Activated naive CD4-positive, alpha-beta T cell treated with anti-CD3 and anti-CD28 coated beads for 36 hours (primary cell): ENCODE measurements at regions of chr11 and their contacts with region 1.

Region 1: GRCh38 chr11:108237058-108237481 is 14.2 kb downstream of the ATM start:
- DNase-seq: no peak
- H3K4me3 Mint-ChIP-seq: peak overlapping the region; percentile 64
- H3K27ac Mint-ChIP-seq: peak overlapping the region; percentile 91
- H3K4me1 Mint-ChIP-seq: peaks cover 75% of the 10 kb centered on the region
- H3K27me3 Mint-ChIP-seq: no peaks in the 10 kb centered on the region

Region 2: GRCh38 chr11:108093128-108093904 is 143.8 kb before region 1 on chr11:
- CTCF ChIA-PET with region 1: no interaction called
- intact Hi-C with region 1: no loop called
- DNase-seq: no peak
- H3K4me3 Mint-ChIP-seq: no peak overlapping the region
- H3K27ac Mint-ChIP-seq: no peak overlapping the region
- H3K4me1 Mint-ChIP-seq: no peaks in the 10 kb centered on the region
- H3K27me3 Mint-ChIP-seq: no peaks in the 10 kb centered on the region

Region 3: GRCh38 chr11:108199446-108200321 is 37.4 kb before region 1 on chr11:
- CTCF ChIA-PET with region 1: interaction called, 3 read pairs
- intact Hi-C with region 1: loop called (anchors 1 kb)
- DNase-seq: peak; percentile 94
- H3K4me3 Mint-ChIP-seq: no peak overlapping the region
- H3K27ac Mint-ChIP-seq: peak overlapping the region; percentile 48
- H3K4me1 Mint-ChIP-seq: peaks cover 86% of the 10 kb centered on the region
- H3K27me3 Mint-ChIP-seq: no peaks in the 10 kb centered on the region

Region 4: GRCh38 chr11:108253176-108253575 is 16.1 kb after region 1 on chr11:
- CTCF ChIA-PET with region 1: interaction called, 5 read pairs
- intact Hi-C with region 1: loop called (anchors 1 kb)
- DNase-seq: no peak
- H3K4me3 Mint-ChIP-seq: no peak overlapping the region
- H3K27ac Mint-ChIP-seq: no peak overlapping the region
- H3K4me1 Mint-ChIP-seq: peaks cover 52% of the 10 kb centered on the region
- H3K27me3 Mint-ChIP-seq: no peaks in the 10 kb centered on the region

Region 5: DNA sequence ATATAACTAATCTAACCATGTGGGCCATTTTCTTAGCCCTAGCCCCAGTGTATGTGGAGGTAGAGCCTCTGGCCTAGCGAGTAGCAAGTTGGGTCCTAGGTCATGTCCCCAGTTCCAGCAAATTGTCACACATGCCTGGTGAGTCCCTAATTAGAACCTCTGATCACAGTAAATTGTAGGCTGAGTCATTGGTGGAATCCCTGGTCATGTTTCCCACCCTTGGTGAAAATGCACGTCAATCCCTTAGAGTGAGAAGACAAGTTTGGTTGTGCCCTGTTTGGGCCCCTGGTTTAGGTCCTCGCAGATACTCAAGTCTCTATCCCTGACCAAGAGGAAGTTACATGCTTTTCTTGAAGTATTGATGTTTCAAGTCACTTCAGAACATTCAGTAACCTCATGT is 32.5 kb after region 1 on chr11:
- CTCF ChIA-PET with region 1: no interaction called
- intact Hi-C with region 1: loop called (anchors 1 kb)
- DNase-seq: peak; percentile 49
- H3K4me3 Mint-ChIP-seq: no peak overlapping the region
- H3K27ac Mint-ChIP-seq: peak overlapping the region; percentile 82
- H3K4me1 Mint-ChIP-seq: peaks cover 41% of the 10 kb centered on the region
- H3K27me3 Mint-ChIP-seq: no peaks in the 10 kb centered on the region

Region 6: DNA sequence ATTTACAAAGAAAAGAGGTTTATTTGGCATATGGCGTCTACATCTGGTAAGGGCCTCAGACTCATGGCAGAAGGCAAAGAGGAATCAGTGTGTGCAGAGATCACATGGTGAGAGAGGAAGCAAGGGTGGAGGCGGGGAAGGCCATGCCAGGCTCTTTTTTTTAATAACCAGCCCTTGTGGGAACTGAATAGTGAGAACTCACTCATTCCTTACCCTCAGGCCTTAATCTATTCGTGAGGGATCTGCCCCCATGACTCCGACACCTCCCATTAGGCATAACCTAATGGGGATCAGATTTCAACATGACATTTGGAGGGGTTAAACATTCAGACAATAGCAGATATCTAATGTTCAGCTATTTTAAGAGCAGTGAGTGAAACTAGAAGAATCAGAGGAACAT is 41.5 kb after region 1 on chr11:
- CTCF ChIA-PET with region 1: interaction called, 5 read pairs
- intact Hi-C with region 1: loop called (anchors 2 kb)
- DNase-seq: peak; percentile 56
- H3K4me3 Mint-ChIP-seq: no peak overlapping the region
- H3K27ac Mint-ChIP-seq: peak overlapping the region; percentile 41
- H3K4me1 Mint-ChIP-seq: peaks cover 63% of the 10 kb centered on the region
- H3K27me3 Mint-ChIP-seq: no peaks in the 10 kb centered on the region

Region 7: GRCh38 chr11:108302121-108302785 is 65.2 kb after region 1 on chr11:
- CTCF ChIA-PET with region 1: interaction called, 5 read pairs
- intact Hi-C with region 1: loop called (anchors 1 kb)
- DNase-seq: no peak
- H3K4me3 Mint-ChIP-seq: no peak overlapping the region
- H3K27ac Mint-ChIP-seq: peak overlapping the region; percentile 50
- H3K4me1 Mint-ChIP-seq: peaks cover 36% of the 10 kb centered on the region
- H3K27me3 Mint-ChIP-seq: no peaks in the 10 kb centered on the region

Region 8: GRCh38 chr11:108432783-108433182 is 195.7 kb after region 1 on chr11:
- CTCF ChIA-PET with region 1: no interaction called
- intact Hi-C with region 1: no loop called
- DNase-seq: no peak
- H3K4me3 Mint-ChIP-seq: no peak overlapping the region
- H3K27ac Mint-ChIP-seq: no peak overlapping the region
- H3K4me1 Mint-ChIP-seq: no peaks in the 10 kb centered on the region
- H3K27me3 Mint-ChIP-seq: no peaks in the 10 kb centered on the region

Region 9: DNA sequence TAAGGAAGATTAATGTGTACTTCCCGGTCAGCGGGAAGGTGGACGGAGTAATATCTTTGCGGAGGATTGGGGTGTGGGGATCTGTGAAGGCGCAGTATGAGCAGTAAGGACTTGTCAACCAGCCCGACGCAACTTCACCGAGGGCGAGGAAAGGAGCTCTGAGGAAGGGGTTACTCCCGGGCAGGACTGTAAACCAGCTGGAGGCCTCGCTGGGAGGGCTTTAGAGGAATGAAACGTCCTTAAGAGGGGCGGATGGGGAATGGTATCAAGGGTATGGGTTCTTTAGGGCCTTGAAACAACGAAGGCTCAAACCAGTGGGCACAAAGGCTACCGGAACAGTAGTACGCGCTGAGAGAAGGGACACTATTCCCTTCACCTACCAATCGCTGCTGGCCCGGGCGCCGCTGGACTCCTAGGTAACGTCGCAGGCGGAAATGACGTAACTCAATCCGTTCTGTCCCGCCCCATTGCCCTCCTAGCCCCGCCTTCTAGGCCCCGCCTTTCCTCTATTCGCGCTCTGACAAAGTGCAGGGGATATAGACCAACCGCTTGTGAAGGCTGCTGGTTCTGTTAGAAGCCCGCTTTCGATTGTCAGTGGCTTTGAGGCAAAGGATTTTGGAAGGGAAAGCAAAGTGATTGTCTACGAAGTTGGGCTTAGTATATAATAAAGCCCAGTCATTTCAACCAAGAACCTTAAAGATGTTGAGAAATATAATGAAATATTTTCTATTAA is 230.2 kb after region 1 on chr11 and contains the start of gene C11orf65:
- CTCF ChIA-PET with region 1: no interaction called
- intact Hi-C with region 1: loop called (anchors 2 kb)
- DNase-seq: peak; percentile 98
- H3K4me3 Mint-ChIP-seq: peak within 1 kb of the TSS; percentile 94
- H3K27ac Mint-ChIP-seq: peak within 1 kb of the TSS; percentile 96
- H3K4me1 Mint-ChIP-seq: peaks cover 8% of the 10 kb centered on the region
- H3K27me3 Mint-ChIP-seq: no peaks in the 10 kb centered on the region
- total RNA-seq, gene C11orf65: 2.2 to 3.1 TPM